Right ventricle myocardium superior (tissue), 1 donor: ENCODE measurements at regions of chr2 and their contacts with region 1.

Region 1: DNA sequence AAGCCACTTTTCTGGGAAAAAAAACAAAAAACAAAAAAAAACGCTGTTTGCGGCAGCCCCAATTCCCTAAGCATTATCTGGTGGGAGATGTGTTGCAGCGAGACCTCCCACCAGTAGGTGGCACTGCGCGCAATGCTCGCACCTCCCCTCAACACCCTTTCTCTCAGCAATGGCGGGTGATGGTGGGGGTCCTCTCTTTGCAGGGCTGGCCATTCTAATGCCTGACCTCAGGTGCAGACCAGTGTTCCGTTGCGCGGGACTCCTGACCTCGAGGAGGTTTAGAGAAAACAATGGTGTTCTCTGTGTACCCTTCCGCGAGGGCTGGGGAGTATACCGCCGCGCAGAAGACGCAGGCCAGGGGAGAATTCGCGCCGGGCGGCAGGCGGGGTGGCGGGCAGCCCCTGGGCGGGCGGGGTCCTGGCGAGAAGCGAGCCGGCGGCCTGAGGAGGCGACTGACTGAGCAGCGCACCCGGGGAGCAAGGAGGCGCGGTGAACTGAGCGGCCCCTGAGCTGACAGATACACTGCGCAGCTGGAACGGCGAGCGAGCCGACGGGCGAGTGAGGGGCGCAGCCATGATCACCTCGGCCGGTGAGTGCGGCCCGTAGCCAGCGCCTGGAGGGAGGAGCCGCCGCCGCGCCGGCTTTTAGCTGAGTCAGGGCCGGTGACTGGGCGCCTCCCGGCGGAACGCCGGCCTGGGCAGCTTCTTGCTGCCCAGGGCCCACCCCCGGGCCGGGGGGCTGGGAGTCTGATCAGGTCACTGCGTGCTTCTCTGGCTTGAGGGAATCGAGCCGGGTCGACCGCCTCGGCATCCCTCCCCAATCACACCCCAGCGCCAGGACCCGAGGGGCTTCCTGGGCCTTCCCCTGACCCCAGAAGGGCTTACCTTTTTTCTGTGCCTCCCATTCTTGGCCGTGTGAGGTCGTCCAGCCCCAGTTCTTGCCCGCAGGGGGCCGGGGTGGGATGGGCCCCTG is at the start of gene PSMD1:
- DNase-seq: peak; percentile 95
- ATAC-seq: peak; percentile 94
- total RNA-seq, gene PSMD1: 81.0 TPM

Region 2: DNA sequence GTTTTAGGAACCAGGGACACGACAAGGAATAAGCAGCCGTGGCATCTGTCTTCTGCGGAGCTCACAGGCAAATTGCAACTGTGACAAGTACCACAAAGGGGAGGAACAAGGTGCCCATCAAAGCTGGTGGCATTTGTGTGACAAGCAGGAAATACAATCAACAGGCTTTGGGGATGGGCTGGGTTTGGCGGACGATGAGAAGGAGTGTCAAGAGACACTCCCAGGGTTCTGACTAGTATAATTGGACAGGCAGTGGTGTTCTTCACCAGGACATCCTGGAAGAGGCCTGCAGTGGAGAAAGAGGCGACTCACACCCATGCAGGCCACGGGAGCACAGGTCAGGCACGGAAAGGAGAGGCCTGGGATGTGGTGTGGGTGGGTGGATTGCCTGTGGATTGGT is 75.0 kb before region 1 on chr2:
- intact Hi-C with region 1: no loop called
- DNase-seq: no peak
- ATAC-seq: no peak

Region 3: GRCh38 chr2:231260442-231261208 is 203.9 kb after region 1 on chr2:
- intact Hi-C with region 1: no loop called
- DNase-seq: no peak
- ATAC-seq: peak; percentile 57

Region 4: DNA sequence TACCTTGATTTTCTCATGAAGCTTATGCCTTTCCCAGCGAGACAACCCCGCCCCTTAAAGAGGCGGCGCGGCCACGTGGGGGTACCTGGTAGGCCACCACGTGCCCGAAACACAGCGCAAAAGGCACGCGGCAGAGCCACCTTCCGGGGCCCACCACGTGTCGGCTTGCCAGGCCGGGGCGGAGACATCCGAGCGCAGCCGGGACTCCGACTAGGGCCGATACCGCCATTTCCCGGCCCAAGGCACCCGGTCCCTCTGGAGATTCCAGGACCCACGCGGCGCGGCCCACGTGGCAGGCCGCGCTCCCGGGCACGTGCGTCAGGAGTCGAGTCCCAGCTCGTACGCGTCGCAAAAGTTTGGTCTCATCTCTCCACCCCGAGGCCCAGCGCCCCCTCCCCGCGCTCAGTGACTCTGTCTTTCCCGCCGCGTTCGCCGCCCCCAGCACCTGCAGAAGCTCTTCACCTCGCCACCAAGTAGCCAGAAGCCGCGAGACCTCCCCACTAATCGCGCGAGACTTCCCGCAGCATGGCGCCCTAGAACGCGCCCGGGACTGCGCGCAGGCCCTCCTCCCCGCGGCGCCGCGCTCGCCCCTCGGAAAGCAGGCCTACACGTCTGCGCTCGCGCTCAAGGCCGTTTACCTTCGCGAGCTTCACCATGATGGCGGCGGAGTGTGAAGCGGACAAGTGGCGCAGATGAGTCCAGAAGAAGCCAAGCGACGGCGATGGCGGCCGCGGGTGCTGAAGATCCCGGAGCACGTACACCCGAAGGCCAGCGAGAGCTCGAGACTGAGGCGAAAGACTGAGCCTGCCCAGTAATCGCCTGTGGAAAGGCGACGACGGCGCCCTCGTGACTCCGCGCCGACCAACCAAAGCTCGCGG is 407.2 kb after region 1 on chr2 and contains the start of gene NCL:
- intact Hi-C with region 1: loop called (anchors 5 kb)
- DNase-seq: peak; percentile 90
- ATAC-seq: peak; percentile 77
- total RNA-seq, gene NCL: 190 TPM

Region 5: GRCh38 chr2:231866450-231866849 is 809.7 kb after region 1 on chr2:
- intact Hi-C with region 1: no loop called
- DNase-seq: no peak
- ATAC-seq: no peak